Left colon (tissue), 2 donors: ENCODE measurements at regions of chrX and their contacts with region 1.

Region 1: DNA sequence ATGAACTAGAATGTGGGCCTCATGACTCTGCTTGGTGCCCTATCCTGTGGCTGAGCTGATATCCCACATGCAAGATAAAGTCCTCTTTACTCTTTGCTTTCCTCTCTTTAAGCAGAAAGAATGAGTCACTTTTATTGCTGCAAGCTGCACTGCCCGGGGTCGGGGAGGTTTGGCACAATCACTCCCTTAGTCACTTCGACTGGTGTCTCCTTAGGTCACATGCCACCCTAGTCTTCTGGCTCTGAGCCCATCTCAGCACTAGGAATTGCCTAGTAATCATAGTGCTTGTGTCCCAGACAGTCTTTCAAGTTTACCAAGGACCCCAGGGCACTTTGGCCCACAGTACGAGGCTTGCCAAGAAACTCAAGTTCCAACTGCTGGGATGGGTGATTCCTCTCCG is 75.1 kb upstream of the CXorf66 start:
- DNase-seq: peak; percentile 8 to 33
- ATAC-seq: peak; percentile 72

Region 2: GRCh38 chrX:139932901-139933796 is 107.3 kb before region 1 on chrX and contains the start of gene ATP11C:
- intact Hi-C with region 1: no loop called
- DNase-seq: peak; percentile 81 to 83
- ATAC-seq: peak; percentile 81
- total RNA-seq, gene ATP11C: 12.8 to 13.3 TPM

Region 3: GRCh38 chrX:140229187-140229586 is 188.8 kb after region 1 on chrX:
- intact Hi-C with region 1: no loop called
- DNase-seq: no peak
- ATAC-seq: no peak

Region 4: DNA sequence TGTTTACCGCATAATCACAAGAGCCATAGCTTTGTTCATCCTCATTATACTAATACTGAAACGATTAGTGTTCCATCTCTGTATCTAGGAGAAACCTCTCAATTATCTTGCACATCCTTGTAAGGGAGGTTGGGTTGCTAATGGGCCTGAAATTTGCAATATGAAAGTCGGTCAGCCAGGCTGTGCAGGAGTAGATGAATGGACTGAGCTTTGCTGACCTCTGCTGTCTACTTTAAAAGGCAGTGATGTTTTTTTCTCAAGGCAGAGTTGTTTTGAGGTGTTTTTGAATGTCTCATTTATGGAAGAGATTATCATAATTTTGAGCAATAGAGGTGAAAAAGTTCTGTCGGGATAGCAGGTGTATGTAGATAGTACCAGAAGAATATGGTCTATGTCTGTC is 621.2 kb after region 1 on chrX:
- intact Hi-C with region 1: loop called in 1 of 2 experiments (anchors 10 kb)
- DNase-seq: no peak
- ATAC-seq: no peak